ENCODE measurements at regions of chr5 and their contacts with region 1.

Region 1: GRCh38 chr5:170183816-170184687 is 48.7 kb upstream of the C5orf58 start:
- DNase-seq: peak; percentile 69
- ATAC-seq: peak; percentile 74
- H3K4me3 Mint-ChIP-seq: no peak overlapping the region
- H3K27ac Mint-ChIP-seq: no peak overlapping the region
- H3K4me1 Mint-ChIP-seq: no peaks in the 10 kb centered on the region
- H3K27me3 Mint-ChIP-seq: peaks cover 14% of the 10 kb centered on the region

Region 2: DNA sequence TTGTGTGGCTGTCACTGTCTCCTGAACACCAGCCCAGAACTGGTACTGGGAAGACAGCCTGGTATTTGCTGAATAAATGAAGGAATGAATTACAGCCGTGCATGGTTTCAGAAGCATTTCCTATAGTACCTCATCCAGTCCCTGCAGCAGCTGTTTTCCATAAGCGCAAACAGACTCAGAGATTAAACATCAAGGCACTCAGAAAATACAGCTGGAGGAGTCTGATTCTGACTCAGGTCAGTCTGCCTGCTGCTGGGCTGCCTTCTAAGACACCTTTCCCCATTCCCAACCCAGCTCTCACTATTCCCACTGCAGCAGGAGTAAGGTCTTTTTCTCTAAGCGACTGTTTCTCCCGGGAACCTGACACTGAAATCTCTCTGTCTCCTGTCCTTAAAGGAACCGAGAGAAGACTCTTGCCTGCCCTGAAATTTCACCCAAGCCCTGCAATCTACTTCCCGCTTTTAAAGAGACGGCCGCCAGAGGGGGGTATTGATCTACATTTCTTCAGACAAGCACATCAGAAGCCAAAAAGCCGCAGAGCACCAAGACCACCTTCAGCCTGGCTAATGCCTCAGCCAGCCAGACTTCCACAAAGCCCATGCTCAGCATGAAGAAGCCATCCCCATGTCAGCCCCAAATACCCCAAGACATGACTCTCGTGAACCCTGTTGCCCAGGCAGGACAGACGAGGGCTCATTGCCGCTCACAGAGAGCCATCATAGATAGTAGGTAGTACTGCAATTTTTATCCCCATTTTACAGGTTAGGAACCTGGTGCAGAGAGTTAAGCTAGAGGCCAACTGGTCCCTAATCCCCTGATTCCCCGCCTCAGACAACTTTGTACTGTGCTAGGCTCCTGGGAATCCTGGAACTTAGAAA is 83.7 kb before region 1 on chr5:
- CTCF ChIA-PET with region 1: interaction called, 14 read pairs
- DNase-seq: peak; percentile 78
- ATAC-seq: peak; percentile 65
- H3K4me3 Mint-ChIP-seq: no peak overlapping the region
- H3K27ac Mint-ChIP-seq: no peak overlapping the region
- H3K4me1 Mint-ChIP-seq: no peaks in the 10 kb centered on the region
- H3K27me3 Mint-ChIP-seq: peaks cover 18% of the 10 kb centered on the region

Region 3: GRCh38 chr5:170154744-170155143 is 29.3 kb before region 1 on chr5:
- CTCF ChIA-PET with region 1: no interaction called
- DNase-seq: no peak
- ATAC-seq: no peak
- H3K4me3 Mint-ChIP-seq: no peak overlapping the region
- H3K27ac Mint-ChIP-seq: no peak overlapping the region
- H3K4me1 Mint-ChIP-seq: no peaks in the 10 kb centered on the region
- H3K27me3 Mint-ChIP-seq: no peaks in the 10 kb centered on the region

Region 4: DNA sequence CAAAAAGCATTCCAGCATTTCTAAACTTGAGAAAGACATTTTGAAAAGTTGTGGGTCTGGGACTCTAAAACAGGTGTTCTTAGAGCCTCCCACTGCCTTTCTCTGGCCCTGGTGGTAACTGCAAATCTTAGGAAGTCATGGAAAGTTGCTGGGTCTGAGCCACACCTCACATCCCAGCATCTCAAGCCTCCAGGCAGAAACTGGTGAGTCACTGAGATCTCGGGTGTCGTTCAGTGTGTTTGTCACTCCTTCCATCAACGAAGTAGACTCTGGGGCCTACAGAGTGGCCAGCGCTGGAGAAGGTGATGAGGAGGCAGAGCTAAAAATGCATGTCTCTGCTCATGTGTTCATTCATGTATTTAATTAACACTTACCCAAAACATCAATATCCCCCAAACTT is 10.8 kb before region 1 on chr5:
- CTCF ChIA-PET with region 1: interaction called, 13 read pairs
- DNase-seq: no peak
- ATAC-seq: no peak
- H3K4me3 Mint-ChIP-seq: no peak overlapping the region
- H3K27ac Mint-ChIP-seq: no peak overlapping the region
- H3K4me1 Mint-ChIP-seq: no peaks in the 10 kb centered on the region
- H3K27me3 Mint-ChIP-seq: peaks cover 20% of the 10 kb centered on the region

Region 5: DNA sequence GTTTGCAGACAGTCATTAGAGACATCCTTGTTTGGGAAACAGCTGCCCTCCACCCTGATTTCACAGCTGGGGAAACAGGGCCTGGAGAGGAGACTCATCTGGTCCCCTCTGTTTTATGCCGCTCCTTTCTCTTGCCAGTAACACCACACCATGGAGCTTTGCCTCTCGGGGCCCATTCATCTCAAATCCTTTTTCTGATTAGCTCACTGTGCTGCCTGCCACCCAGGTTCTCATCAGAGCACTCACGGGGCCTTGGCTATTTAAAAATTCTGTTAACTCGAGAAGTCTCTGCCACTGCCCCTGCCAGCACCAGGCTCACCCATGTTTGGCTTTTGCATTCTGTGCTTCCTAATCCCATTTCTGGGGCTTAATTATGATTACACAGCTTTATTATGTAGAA is 11.9 kb after region 1 on chr5:
- CTCF ChIA-PET with region 1: interaction called, 37 read pairs
- DNase-seq: no peak
- ATAC-seq: no peak
- H3K4me3 Mint-ChIP-seq: no peak overlapping the region
- H3K27ac Mint-ChIP-seq: no peak overlapping the region
- H3K4me1 Mint-ChIP-seq: no peaks in the 10 kb centered on the region
- H3K27me3 Mint-ChIP-seq: peaks cover 14% of the 10 kb centered on the region

Region 6: GRCh38 chr5:170662966-170663365 is 478.9 kb after region 1 on chr5:
- CTCF ChIA-PET with region 1: no interaction called
- DNase-seq: peak; percentile 30
- ATAC-seq: no peak
- H3K4me3 Mint-ChIP-seq: no peak overlapping the region
- H3K27ac Mint-ChIP-seq: no peak overlapping the region
- H3K4me1 Mint-ChIP-seq: no peaks in the 10 kb centered on the region
- H3K27me3 Mint-ChIP-seq: peaks cover 19% of the 10 kb centered on the region